ENCODE measurements at regions of chr3 and their contacts with region 1.

Region 1: GRCh38 chr3:52056968-52057805 is 816 bp upstream of the DUSP7 start:
- DNase-seq: peak; percentile 97
- H3K4me3 ChIP-seq: peak overlapping the region; percentile 82 to 92 (median 83)
- H3K27ac ChIP-seq: peak overlapping the region; percentile 94 to 98 (median 96)
- H3K4me1 ChIP-seq: peaks cover 49 to 90% (median 60%) of the 10 kb centered on the region in 3 donors
- H3K27me3 ChIP-seq: no peaks in the 10 kb centered on the region
- CTCF ChIP-seq: peak in 2 of 6 experiments; percentile 12 to 26
- POLR2A ChIP-seq: peak in 3 of 4 donors; percentile 20 to 69 (median 64)

Region 2: GRCh38 chr3:51591231-51591630 is 466.0 kb before region 1 on chr3:
- intact Hi-C with region 1: no loop called
- DNase-seq: no peak
- H3K4me3 ChIP-seq: no peak overlapping the region
- H3K27ac ChIP-seq: no peak overlapping the region
- H3K4me1 ChIP-seq: no peaks in the 10 kb centered on the region
- H3K27me3 ChIP-seq: no peaks in the 10 kb centered on the region
- CTCF ChIP-seq: no peak
- POLR2A ChIP-seq: no peak

Region 3: GRCh38 chr3:51830836-51831385 is 226.3 kb before region 1 on chr3:
- intact Hi-C with region 1: no loop called
- DNase-seq: no peak
- H3K4me3 ChIP-seq: no peak overlapping the region
- H3K27ac ChIP-seq: no peak overlapping the region
- H3K4me1 ChIP-seq: no peaks in the 10 kb centered on the region
- H3K27me3 ChIP-seq: peaks cover 0 to 14% (median 0%) of the 10 kb centered on the region in 4 donors
- CTCF ChIP-seq: no peak
- POLR2A ChIP-seq: no peak

Region 4: DNA sequence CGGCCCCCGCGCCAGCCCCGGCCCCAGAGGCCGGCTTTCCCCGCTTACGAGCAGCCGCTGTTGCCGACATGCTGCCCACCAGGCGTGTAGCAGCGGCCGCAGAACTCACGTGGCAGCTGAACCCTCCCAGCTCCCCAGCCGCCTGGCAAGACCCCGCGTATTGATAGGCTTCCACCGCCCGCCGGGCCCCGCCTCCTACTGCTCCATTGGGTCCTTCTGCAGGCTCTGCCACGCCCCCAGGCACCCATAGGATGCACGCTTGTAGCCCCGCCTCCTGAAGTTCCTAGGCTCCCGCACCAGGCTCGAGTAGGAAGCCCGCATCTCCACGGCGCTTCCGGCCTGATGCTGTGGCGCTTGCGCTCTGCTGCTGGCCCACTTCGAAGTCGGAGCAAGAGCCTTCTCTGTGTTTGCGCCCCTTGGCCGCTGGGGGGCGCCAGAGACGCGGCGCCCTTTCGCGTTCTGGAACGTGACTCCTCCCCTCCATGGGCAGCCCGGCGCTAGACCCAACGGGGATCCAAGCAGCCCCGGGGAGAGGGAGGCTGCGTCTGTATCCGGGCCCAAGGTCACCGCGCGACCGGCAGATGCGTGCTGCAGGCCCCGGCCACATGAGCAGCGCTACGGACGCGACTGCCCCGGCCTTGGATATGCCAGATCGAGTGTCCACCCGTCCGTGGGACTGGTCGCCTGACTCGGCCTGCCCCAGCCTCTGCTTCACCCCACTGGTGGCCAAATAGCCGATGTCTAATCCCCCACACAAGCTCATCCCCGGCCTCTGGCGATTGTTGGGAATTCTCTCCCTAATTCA is 115.2 kb before region 1 on chr3 and contains the starts of genes PARP3 and RRP9:
- intact Hi-C with region 1: no loop called
- DNase-seq: peak; percentile 99
- H3K4me3 ChIP-seq: peak within 1 kb of the TSS; percentile 53 to 95 (median 84)
- H3K27ac ChIP-seq: peak within 1 kb of the TSS; percentile 91 to 97 (median 96)
- H3K4me1 ChIP-seq: peaks cover 16 to 44% (median 26%) of the 10 kb centered on the region in 3 donors
- H3K27me3 ChIP-seq: no peaks in the 10 kb centered on the region
- CTCF ChIP-seq: peak; percentile 98 to 100 (median 100)
- POLR2A ChIP-seq: peak in 3 of 4 donors; percentile 6 to 71 (median 50)
- total RNA-seq, gene PARP3: 7.3 to 33.0 (median 14.2) TPM
- total RNA-seq, gene RRP9: 11.1 to 30.3 (median 21.3) TPM

Region 5: GRCh38 chr3:52123106-52123725 is 66.0 kb after region 1 on chr3:
- intact Hi-C with region 1: loop called (anchors 10 kb)
- DNase-seq: no peak
- H3K4me3 ChIP-seq: no peak overlapping the region
- H3K27ac ChIP-seq: peak overlapping the region; percentile 23 to 70 (median 48)
- H3K4me1 ChIP-seq: peaks cover 10 to 50% (median 26%) of the 10 kb centered on the region in 3 donors
- H3K27me3 ChIP-seq: no peaks in the 10 kb centered on the region
- CTCF ChIP-seq: peak; percentile 89 to 96 (median 94)
- POLR2A ChIP-seq: no peak

Region 6: DNA sequence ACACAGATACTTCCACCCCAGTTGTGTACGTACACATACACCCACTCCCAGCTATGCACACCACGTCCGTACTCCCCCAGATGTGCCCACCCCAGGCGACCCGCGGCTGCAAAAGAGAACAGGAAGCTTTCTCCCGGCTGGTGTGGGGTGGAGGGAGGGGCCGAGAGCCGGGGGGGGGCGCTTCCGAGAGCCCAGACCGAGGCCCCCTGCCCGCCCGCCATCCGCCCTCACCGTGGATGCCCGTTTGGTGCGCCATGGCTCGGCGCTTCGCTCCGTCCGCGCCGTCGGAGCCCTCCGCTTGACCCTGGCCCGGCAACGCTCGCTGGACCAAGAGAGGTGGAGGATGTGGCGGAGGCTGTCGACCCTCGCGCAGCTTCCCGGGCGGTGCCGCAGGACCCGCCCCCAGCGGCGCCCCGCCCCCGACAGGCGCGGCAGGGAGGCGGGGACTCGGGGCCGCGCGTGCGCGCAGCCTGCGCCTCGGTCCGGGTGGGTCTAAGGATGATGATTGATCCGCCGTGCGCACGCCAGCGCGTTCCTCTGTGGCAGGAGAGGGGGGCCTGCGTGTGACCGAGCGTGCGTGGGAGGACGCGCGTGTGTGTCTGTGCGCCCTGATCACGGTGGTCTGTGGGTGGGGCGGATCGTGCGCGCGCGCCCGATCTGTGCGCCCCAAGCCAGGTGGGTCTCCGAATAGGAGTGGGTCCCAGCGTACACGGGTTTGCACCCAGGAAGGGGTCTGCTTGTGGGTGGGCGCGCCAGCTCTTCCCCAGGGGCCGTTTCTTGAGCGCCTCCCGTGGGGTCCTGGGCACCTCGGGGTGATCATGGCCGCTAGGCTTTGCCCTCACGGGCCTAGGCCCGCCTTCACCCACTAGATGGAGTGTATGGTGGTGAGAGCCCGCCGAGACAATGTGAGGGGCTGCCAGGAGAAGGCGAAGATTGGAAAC is 181.8 kb after region 1 on chr3 and contains the start of gene TWF2:
- intact Hi-C with region 1: no loop called
- DNase-seq: no peak
- H3K4me3 ChIP-seq: peak within 1 kb of the TSS; percentile 84 to 94 (median 93)
- H3K27ac ChIP-seq: peak within 1 kb of the TSS; percentile 95 to 97 (median 96)
- H3K4me1 ChIP-seq: peaks cover 37 to 71% (median 39%) of the 10 kb centered on the region in 3 donors
- H3K27me3 ChIP-seq: no peaks in the 10 kb centered on the region
- CTCF ChIP-seq: peak in 5 of 6 experiments; percentile 26 to 59 (median 52)
- POLR2A ChIP-seq: peak in 3 of 4 donors; percentile 67 to 90 (median 68)
- total RNA-seq, gene TWF2: 31.6 to 74.9 (median 55.7) TPM